Natural killer cell (primary cell): ENCODE measurements at regions of chr3 and their contacts with region 1.

Region 1: GRCh38 chr3:50245831-50246516 is 10.0 kb downstream of the GNAI2 start:
- DNase-seq: peak; percentile 96 to 98
- ATAC-seq: peak; percentile 76 to 92 (median 84)
- H3K4me3 ChIP-seq: peak overlapping the region; percentile 24
- H3K4me3 Mint-ChIP-seq: peak overlapping the region; percentile 86
- H3K27ac ChIP-seq: peak overlapping the region; percentile 85
- H3K27ac Mint-ChIP-seq: peak overlapping the region; percentile 95
- H3K4me1 ChIP-seq: peaks cover 100% of the 10 kb centered on the region
- H3K4me1 Mint-ChIP-seq: peaks cover 69 to 88% of the 10 kb centered on the region in 2 donors
- H3K27me3 ChIP-seq: no peaks in the 10 kb centered on the region
- H3K27me3 Mint-ChIP-seq: no peaks in the 10 kb centered on the region
- CTCF ChIP-seq: peak; percentile 98

Region 2: DNA sequence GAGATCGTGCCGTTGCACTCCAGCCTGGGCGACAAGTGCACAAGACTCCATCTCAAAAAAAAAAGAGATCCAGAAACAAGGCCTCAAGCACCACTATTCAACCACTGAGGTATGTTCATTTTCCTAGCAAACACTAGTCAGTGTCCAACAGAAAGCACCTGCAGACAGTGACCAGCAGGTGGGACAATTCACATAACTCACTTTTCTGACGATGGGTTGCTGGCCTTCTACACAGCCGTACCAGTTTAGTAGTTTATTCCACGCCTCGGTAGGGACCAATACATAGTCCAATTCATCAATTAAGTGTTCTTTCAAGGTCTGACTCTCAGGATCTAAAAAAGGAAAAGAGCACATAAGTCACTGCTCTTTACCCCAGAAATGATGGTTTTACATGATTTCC is 918.5 kb before region 1 on chr3:
- intact Hi-C with region 1: no loop called
- DNase-seq: no peak
- ATAC-seq: no peak
- H3K4me3 ChIP-seq: no peak overlapping the region
- H3K4me3 Mint-ChIP-seq: no peak overlapping the region
- H3K27ac ChIP-seq: no peak overlapping the region
- H3K27ac Mint-ChIP-seq: no peak overlapping the region
- H3K4me1 ChIP-seq: no peaks in the 10 kb centered on the region
- H3K4me1 Mint-ChIP-seq: peaks cover 0 to 7% of the 10 kb centered on the region in 2 donors
- H3K27me3 ChIP-seq: no peaks in the 10 kb centered on the region
- H3K27me3 Mint-ChIP-seq: no peaks in the 10 kb centered on the region
- CTCF ChIP-seq: no peak

Region 3: DNA sequence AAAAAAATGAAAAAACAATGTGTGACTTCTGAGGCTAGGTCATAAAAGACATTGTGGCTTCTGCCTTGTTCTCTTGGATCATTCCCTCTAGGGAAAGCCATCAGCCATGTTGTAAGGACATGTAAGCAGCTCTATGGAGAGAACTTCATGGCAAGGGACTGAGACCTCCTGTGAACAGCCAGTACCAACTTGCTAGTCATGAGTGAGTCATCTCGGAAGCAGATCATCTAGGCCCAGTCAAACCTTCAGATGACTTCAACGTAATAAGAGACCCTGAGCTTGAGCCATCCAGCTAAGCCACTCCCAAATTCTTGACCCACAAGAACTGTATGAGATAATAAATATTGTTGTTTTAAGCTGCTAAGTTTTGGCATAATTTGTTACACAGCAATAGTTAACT is 321.3 kb before region 1 on chr3:
- intact Hi-C with region 1: no loop called
- DNase-seq: no peak
- ATAC-seq: no peak
- H3K4me3 ChIP-seq: no peak overlapping the region
- H3K4me3 Mint-ChIP-seq: no peak overlapping the region
- H3K27ac ChIP-seq: no peak overlapping the region
- H3K27ac Mint-ChIP-seq: no peak overlapping the region
- H3K4me1 ChIP-seq: peaks cover 13% of the 10 kb centered on the region
- H3K4me1 Mint-ChIP-seq: peaks cover 9 to 25% of the 10 kb centered on the region in 2 donors
- H3K27me3 ChIP-seq: no peaks in the 10 kb centered on the region
- H3K27me3 Mint-ChIP-seq: no peaks in the 10 kb centered on the region
- CTCF ChIP-seq: no peak

Region 4: GRCh38 chr3:50150808-50151686 is 94.9 kb before region 1 on chr3:
- intact Hi-C with region 1: no loop called
- DNase-seq: no peak
- ATAC-seq: no peak
- H3K4me3 ChIP-seq: no peak overlapping the region
- H3K4me3 Mint-ChIP-seq: no peak overlapping the region
- H3K27ac ChIP-seq: no peak overlapping the region
- H3K27ac Mint-ChIP-seq: no peak overlapping the region
- H3K4me1 ChIP-seq: peaks cover 13% of the 10 kb centered on the region
- H3K4me1 Mint-ChIP-seq: peaks cover 6 to 20% of the 10 kb centered on the region in 2 donors
- H3K27me3 ChIP-seq: peaks cover 11% of the 10 kb centered on the region
- H3K27me3 Mint-ChIP-seq: peaks cover 11 to 18% of the 10 kb centered on the region in 2 donors
- CTCF ChIP-seq: no peak

Region 5: DNA sequence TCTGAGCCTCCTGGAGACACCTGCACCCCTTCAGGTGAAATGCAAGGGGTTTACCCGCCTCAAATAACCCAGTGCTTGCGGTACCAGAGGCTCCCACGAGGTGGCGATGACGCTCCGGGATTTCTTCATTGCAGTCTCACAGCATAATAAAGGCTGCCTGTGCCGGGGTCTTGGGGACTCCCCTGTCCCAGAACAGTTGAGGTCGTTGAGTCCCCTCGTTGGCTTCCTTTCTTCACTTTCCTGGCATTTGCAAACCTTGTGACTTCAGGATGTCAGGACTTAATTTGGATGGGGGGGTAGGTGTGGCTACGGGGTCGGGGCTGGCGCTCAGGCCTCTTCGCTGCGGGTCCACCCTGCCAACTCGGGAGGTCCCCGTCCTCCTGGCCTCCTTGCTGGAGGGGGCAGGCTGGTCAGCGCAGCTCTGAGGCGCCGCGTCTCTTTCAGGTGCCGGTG is 53.3 kb before region 1 on chr3:
- intact Hi-C with region 1: loop called (anchors 1 kb)
- DNase-seq: peak; percentile 81 to 91
- ATAC-seq: peak; percentile 54 to 69 (median 58)
- H3K4me3 ChIP-seq: no peak overlapping the region
- H3K4me3 Mint-ChIP-seq: no peak overlapping the region
- H3K27ac ChIP-seq: no peak overlapping the region
- H3K27ac Mint-ChIP-seq: no peak overlapping the region
- H3K4me1 ChIP-seq: peaks cover 21% of the 10 kb centered on the region
- H3K4me1 Mint-ChIP-seq: peaks cover 0 to 6% of the 10 kb centered on the region in 2 donors
- H3K27me3 ChIP-seq: peaks cover 12% of the 10 kb centered on the region
- H3K27me3 Mint-ChIP-seq: peaks cover 7 to 12% of the 10 kb centered on the region in 2 donors
- CTCF ChIP-seq: peak; percentile 83

Region 6: DNA sequence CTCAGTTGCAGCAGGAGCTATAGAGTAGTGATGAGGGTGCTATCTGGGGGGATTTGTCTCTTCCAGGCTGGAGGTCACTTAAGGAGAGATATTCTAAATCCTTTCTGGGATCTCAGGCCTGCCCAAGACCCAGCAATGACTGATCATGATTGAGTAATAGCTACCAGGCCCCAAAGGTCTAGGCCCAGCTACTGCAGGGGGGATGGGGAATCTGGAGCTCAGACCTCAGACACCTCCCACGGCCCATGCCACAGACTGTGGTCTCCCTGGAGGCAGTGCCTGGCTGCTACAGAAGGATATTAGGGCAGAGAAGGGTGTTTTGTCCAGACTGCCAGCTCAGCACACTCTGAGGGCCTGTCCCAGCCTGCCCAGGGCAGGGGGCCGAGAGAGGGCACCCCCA is 34.0 kb before region 1 on chr3:
- intact Hi-C with region 1: no loop called
- DNase-seq: no peak
- ATAC-seq: peak in 1 of 3 donors; percentile 41
- H3K4me3 ChIP-seq: no peak overlapping the region
- H3K4me3 Mint-ChIP-seq: no peak overlapping the region
- H3K27ac ChIP-seq: no peak overlapping the region
- H3K27ac Mint-ChIP-seq: no peak overlapping the region
- H3K4me1 ChIP-seq: no peaks in the 10 kb centered on the region
- H3K4me1 Mint-ChIP-seq: no peaks in the 10 kb centered on the region
- H3K27me3 ChIP-seq: no peaks in the 10 kb centered on the region
- H3K27me3 Mint-ChIP-seq: peaks cover 0 to 16% of the 10 kb centered on the region in 2 donors
- CTCF ChIP-seq: no peak

Region 7: DNA sequence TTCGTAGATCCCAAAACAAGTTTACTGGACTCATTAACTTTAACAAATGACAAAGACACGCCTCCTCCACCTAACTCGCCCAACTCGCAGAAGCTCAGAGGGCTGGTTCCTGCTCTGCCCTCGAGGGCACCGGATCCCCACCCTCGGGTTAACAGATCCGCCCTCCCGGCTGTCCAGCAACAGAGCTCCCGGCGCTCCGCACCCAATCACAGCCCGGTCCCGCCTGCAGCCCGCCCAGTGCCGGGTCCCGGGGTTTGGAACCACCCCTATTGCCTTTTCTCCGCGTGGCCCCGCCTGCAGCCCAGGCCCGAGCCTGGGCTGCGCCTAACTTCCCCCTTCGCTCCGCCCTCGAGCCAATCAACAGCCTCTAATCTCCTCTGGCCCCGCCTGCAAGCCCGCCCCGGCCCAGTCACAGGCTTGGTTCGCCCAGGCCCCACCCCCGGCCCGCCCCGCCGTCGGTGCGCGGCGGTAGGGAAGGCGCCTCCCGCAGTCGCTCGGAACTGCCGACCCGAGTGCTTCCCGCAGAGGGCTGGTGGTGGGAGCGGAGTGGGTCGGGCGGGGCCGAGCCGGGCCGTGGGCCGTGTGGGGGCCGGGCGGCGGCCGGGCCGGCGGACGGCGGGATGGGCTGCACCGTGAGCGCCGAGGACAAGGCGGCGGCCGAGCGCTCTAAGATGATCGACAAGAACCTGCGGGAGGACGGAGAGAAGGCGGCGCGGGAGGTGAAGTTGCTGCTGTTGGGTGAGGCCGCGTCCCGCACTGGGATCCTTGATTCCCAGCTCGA is 10.1 kb before region 1 on chr3 and contains the start of gene GNAI2:
- intact Hi-C with region 1: loop called (anchors 1 kb)
- DNase-seq: peak; percentile 98 to 99
- ATAC-seq: peak; percentile 85 to 97 (median 88)
- H3K4me3 ChIP-seq: peak within 1 kb of the TSS; percentile 96
- H3K4me3 Mint-ChIP-seq: peak within 1 kb of the TSS; percentile 98
- H3K27ac ChIP-seq: peak within 1 kb of the TSS; percentile 87
- H3K27ac Mint-ChIP-seq: peak within 1 kb of the TSS; percentile 95 to 96
- H3K4me1 ChIP-seq: peaks cover 50% of the 10 kb centered on the region
- H3K4me1 Mint-ChIP-seq: peaks cover 32 to 49% of the 10 kb centered on the region in 2 donors
- H3K27me3 ChIP-seq: no peaks in the 10 kb centered on the region
- H3K27me3 Mint-ChIP-seq: no peaks in the 10 kb centered on the region
- CTCF ChIP-seq: no peak
- total RNA-seq, gene GNAI2: 428 to 467 (median 447) TPM

Region 8: GRCh38 chr3:50260027-50260941 is 14.3 kb after region 1 on chr3:
- intact Hi-C with region 1: loop called (anchors 1 kb)
- DNase-seq: peak; percentile 92
- ATAC-seq: peak; percentile 95 to 98 (median 95)
- H3K4me3 ChIP-seq: peak overlapping the region; percentile 44
- H3K4me3 Mint-ChIP-seq: peak overlapping the region; percentile 77
- H3K27ac ChIP-seq: peak overlapping the region; percentile 77
- H3K27ac Mint-ChIP-seq: peak overlapping the region; percentile 71 to 84
- H3K4me1 ChIP-seq: peaks cover 20% of the 10 kb centered on the region
- H3K4me1 Mint-ChIP-seq: peaks cover 5 to 16% of the 10 kb centered on the region in 2 donors
- H3K27me3 ChIP-seq: no peaks in the 10 kb centered on the region
- H3K27me3 Mint-ChIP-seq: no peaks in the 10 kb centered on the region
- CTCF ChIP-seq: peak; percentile 92

Region 9: DNA sequence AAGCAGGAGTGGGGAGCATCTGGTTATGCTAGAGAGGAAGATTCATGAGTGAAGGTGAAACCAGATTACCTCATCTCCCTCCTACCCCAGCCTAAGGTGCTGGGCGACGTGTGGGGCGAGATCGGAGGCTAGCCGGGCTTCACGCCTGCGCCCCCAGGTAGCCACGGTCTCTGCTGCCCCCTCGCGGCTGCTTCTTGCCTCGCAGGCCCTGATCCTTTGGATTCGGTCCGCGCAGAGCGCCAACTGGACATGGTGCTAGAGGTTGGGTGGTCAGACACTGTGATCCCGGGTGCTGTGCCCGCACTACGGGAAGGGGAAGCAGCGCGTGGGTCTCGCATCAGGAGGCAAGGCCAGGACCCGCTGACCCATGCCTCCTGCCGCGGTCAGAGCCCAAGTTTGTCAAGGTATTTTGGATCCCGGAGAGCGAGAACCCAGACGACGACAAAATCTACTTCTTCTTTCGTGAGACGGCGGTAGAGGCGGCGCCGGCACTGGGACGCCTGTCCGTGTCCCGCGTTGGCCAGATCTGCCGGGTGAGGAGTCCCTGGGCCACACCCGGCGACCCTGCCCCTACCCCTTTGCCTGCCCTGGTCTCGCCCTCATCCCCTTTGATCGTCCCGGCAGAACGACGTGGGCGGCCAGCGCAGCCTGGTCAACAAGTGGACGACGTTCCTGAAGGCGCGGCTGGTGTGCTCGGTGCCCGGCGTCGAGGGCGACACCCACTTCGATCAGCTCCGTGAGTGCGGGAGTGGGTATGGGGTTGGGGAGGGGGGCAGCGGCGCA is 27.1 kb after region 1 on chr3:
- intact Hi-C with region 1: loop called (anchors 1 kb)
- DNase-seq: peak; percentile 89 to 91
- ATAC-seq: peak; percentile 90 to 94 (median 93)
- H3K4me3 ChIP-seq: no peak overlapping the region
- H3K4me3 Mint-ChIP-seq: peak overlapping the region; percentile 70
- H3K27ac ChIP-seq: no peak overlapping the region
- H3K27ac Mint-ChIP-seq: peak overlapping the region; percentile 67 to 82
- H3K4me1 ChIP-seq: peaks cover 33% of the 10 kb centered on the region
- H3K4me1 Mint-ChIP-seq: peaks cover 11 to 32% of the 10 kb centered on the region in 2 donors
- H3K27me3 ChIP-seq: peaks cover 38% of the 10 kb centered on the region
- H3K27me3 Mint-ChIP-seq: peaks cover 13 to 35% of the 10 kb centered on the region in 2 donors
- CTCF ChIP-seq: peak; percentile 96